IMR-90 (cell line): ENCODE measurements at regions of chr19 and their contacts with region 1.

Region 1: DNA sequence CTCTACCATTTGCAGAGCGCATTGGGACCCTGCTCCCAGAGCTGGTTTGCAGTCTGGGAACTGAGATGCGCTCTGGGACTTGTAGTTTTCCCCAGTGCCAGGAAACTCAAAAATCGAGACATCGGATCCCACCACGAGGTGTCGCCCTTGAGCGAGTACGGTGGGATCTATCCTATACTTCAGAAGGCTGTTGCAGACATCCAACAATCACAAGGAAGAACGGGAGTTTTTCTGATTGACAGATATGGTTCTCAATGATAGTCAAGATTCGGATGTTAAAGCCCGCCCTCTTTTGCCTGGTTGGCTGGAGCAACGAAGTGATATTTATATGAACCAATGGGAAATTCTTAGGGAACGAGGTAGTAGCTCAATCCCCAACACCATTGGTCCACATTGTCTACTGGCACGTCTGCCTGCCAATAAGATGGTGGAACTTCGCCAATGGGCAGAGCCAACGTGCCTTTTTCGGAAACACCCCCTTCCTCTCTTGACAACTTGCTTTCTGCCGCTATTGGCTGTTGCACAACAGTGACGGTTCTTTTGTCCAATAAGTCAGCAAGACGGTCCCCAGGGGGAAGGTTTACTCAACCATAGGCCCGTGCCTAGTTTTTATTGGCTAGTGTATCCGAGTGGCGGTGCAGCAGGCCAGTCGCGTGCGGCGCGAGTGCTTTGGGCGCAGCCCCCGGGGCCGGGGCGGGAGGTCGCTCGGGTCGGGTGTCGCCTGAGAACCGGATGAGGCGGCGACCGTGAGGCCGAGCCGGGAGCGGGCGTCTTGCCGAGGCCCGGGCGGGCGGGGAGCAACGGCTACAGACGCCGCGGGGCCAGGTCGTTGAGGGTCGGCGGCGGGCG is at the start of gene DNM2:
- DNase-seq: peak; percentile 100
- ATAC-seq: peak; percentile 91
- H3K4me3 ChIP-seq: peak within 1 kb of the TSS; percentile 82
- H3K27ac ChIP-seq: peak within 1 kb of the TSS; percentile 78
- H3K4me1 ChIP-seq: peaks cover 7% of the 10 kb centered on the region
- H3K27me3 ChIP-seq: no peaks in the 10 kb centered on the region
- CTCF ChIP-seq: peak; percentile 93
- POLR2A ChIP-seq: no peak
- RAD21 ChIP-seq: peak; percentile 81
- total RNA-seq, gene DNM2: 55.0 and 55.6 TPM in 2 replicates

Region 2: GRCh38 chr19:10769533-10770491 is 52.2 kb after region 1 on chr19:
- CTCF ChIA-PET with region 1: no interaction called
- POLR2A ChIA-PET with region 1: no interaction called
- dilution Hi-C with region 1: no loop called
- in situ Hi-C with region 1: no loop called
- intact Hi-C with region 1: loop called (anchors 10 kb)
- DNase-seq: peak; percentile 26
- ATAC-seq: peak; percentile 40
- H3K4me3 ChIP-seq: no peak overlapping the region
- H3K27ac ChIP-seq: no peak overlapping the region
- H3K4me1 ChIP-seq: peaks cover 16% of the 10 kb centered on the region
- H3K27me3 ChIP-seq: no peaks in the 10 kb centered on the region
- CTCF ChIP-seq: peak; percentile 36
- POLR2A ChIP-seq: no peak
- RAD21 ChIP-seq: peak; percentile 40

Region 3: GRCh38 chr19:10817291-10818038 is 99.9 kb after region 1 on chr19:
- CTCF ChIA-PET with region 1: no interaction called
- POLR2A ChIA-PET with region 1: no interaction called
- dilution Hi-C with region 1: no loop called
- in situ Hi-C with region 1: no loop called
- intact Hi-C with region 1: loop called (anchors 1 kb)
- DNase-seq: peak; percentile 98
- ATAC-seq: peak; percentile 66
- H3K4me3 ChIP-seq: peak overlapping the region; percentile 63
- H3K27ac ChIP-seq: peak overlapping the region; percentile 98
- H3K4me1 ChIP-seq: peaks cover 33% of the 10 kb centered on the region
- H3K27me3 ChIP-seq: no peaks in the 10 kb centered on the region
- CTCF ChIP-seq: no peak
- POLR2A ChIP-seq: peak; percentile 97
- RAD21 ChIP-seq: no peak

Region 4: GRCh38 chr19:10835754-10836477 is 118.3 kb after region 1 on chr19 and contains the start of gene TMED1:
- CTCF ChIA-PET with region 1: interaction called, 7 read pairs
- POLR2A ChIA-PET with region 1: no interaction called
- dilution Hi-C with region 1: no loop called
- in situ Hi-C with region 1: no loop called
- intact Hi-C with region 1: loop called (anchors 1 kb)
- DNase-seq: peak; percentile 98
- ATAC-seq: peak; percentile 93
- H3K4me3 ChIP-seq: peak within 1 kb of the TSS; percentile 64
- H3K27ac ChIP-seq: peak within 1 kb of the TSS; percentile 96
- H3K4me1 ChIP-seq: peaks cover 9% of the 10 kb centered on the region
- H3K27me3 ChIP-seq: no peaks in the 10 kb centered on the region
- CTCF ChIP-seq: peak; percentile 41
- POLR2A ChIP-seq: peak; percentile 74
- RAD21 ChIP-seq: peak; percentile 29; the same call in 1 of the 2 replicates
- total RNA-seq, gene TMED1: 32.8 and 37.6 TPM in 2 replicates

Region 5: DNA sequence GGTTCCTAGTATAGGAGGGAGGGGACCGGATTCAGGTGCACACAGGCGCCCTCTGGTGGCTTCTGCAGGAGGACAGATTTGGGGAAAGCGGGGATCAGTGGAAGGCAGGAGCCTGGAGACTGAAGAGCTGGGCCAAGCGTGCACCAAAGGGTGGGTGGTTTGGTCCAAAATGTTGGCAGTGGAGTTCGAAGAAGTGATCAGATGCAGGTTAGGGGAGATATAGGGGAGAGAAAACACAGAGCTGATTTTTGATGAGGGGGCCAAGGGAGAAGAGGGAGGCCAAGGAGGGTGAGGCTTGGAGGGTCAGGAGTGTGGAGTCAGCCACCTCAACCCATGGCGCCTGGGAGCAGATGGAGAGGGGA is 146.9 kb after region 1 on chr19:
- CTCF ChIA-PET with region 1: interaction called, 23 read pairs
- POLR2A ChIA-PET with region 1: interaction called, 3 read pairs
- dilution Hi-C with region 1: no loop called
- in situ Hi-C with region 1: no loop called
- intact Hi-C with region 1: loop called (anchors 1 kb)
- DNase-seq: peak; percentile 68
- ATAC-seq: peak; percentile 93
- H3K4me3 ChIP-seq: no peak overlapping the region
- H3K27ac ChIP-seq: no peak overlapping the region
- H3K4me1 ChIP-seq: peaks cover 3% of the 10 kb centered on the region
- H3K27me3 ChIP-seq: no peaks in the 10 kb centered on the region
- CTCF ChIP-seq: peak; percentile 85
- POLR2A ChIP-seq: no peak
- RAD21 ChIP-seq: peak; percentile 66

Region 6: DNA sequence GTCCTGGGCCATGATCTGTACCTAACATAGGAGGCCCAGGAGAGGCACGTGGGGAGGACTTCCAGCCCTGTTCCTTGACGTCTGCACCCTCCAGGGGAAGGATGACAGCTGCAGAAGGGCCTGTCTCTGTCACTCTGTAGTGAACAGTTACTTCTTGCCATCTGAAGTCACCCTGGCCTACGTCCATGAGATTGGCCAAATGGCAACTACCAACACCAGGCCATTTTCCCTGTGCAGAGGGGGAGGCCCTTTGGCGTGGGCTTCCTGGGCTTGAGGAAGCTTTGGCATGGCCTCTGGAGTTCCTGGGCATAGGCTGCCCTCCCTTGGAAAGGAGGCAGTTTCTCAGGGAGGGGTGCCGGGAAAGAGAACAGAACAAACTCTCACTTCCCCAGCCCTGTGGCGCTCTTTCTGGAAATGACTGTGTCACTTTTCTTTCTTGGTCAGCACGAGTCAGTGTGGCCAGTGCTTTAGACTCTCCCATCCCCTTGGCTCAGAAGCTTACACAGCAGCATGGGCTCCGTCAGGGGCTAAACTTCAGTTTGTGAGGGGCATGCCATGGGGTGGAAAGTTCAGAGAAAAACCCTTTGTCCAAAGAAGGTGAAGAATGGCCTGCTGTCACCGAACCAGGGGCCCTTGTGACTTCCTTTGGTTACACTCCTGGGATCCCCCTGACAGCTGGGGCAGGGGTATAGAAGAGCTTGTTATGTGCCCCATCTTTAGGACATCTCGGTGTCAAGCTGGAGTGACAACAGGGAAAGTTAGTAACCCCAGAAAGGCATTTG is 159.1 kb after region 1 on chr19:
- CTCF ChIA-PET with region 1: no interaction called
- POLR2A ChIA-PET with region 1: no interaction called
- dilution Hi-C with region 1: no loop called
- in situ Hi-C with region 1: no loop called
- intact Hi-C with region 1: no loop called
- DNase-seq: no peak
- ATAC-seq: no peak
- H3K4me3 ChIP-seq: no peak overlapping the region
- H3K27ac ChIP-seq: no peak overlapping the region
- H3K4me1 ChIP-seq: peaks cover 3% of the 10 kb centered on the region; the same call in 1 of the 2 replicates
- H3K27me3 ChIP-seq: no peaks in the 10 kb centered on the region
- CTCF ChIP-seq: no peak
- POLR2A ChIP-seq: no peak
- RAD21 ChIP-seq: no peak

Region 7: GRCh38 chr19:10975374-10976130 is 258.0 kb after region 1 on chr19:
- CTCF ChIA-PET with region 1: no interaction called
- POLR2A ChIA-PET with region 1: no interaction called
- dilution Hi-C with region 1: no loop called
- in situ Hi-C with region 1: no loop called
- intact Hi-C with region 1: no loop called
- DNase-seq: peak; percentile 66
- ATAC-seq: peak; percentile 74
- H3K4me3 ChIP-seq: no peak overlapping the region
- H3K27ac ChIP-seq: peak overlapping the region; percentile 48; the same call in 1 of the 2 replicates
- H3K4me1 ChIP-seq: peaks cover 13% of the 10 kb centered on the region
- H3K27me3 ChIP-seq: no peaks in the 10 kb centered on the region
- CTCF ChIP-seq: no peak
- POLR2A ChIP-seq: no peak
- RAD21 ChIP-seq: no peak